GM12878 (cell line): ENCODE measurements at regions of chr19 and their contacts with region 1.

Region 1: DNA sequence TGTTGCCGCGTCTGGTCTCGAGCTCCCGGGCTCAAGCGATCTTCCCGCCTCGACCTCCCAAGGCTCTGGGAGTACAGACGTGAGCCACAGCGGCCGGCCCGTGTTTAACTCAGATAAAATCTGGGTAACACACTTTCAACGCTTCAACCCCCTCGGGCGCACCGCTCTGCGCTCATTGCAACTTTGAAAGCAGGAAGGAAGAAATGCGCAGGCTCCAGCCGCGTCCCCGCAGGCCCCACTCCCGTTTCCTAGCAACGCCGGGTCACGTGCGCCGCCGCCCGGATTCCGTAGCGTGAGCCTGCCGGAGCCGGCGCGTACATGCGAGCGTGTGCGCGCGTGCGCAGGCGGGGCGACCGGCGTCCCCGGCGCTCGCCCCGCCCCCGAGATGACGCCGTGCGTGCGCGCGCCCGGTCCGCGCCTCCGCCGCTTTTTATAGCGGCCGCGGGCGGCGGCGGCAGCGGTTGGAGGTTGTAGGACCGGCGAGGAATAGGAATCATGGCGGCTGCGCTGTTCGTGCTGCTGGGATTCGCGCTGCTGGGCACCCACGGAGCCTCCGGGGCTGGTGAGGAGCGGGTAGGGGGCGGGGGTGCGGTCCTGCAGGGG is at the start of gene BSG:
- DNase-seq: peak; percentile 88
- ATAC-seq: peak; percentile 76
- H3K4me3 ChIP-seq: peak within 1 kb of the TSS; percentile 83
- H3K27ac ChIP-seq: peak within 1 kb of the TSS; percentile 88
- H3K4me1 ChIP-seq: peaks cover 3% of the 10 kb centered on the region; the same call in 1 of the 2 replicates
- H3K27me3 ChIP-seq: no peaks in the 10 kb centered on the region
- CTCF ChIP-seq: no peak
- EP300 ChIP-seq: no peak; a peak in 1 of 4 replicates
- POLR2A ChIP-seq: peak; percentile 99
- RAD21 ChIP-seq: no peak
- polyA plus RNA-seq, gene BSG: 2.8 to 9.5 TPM

Region 2: DNA sequence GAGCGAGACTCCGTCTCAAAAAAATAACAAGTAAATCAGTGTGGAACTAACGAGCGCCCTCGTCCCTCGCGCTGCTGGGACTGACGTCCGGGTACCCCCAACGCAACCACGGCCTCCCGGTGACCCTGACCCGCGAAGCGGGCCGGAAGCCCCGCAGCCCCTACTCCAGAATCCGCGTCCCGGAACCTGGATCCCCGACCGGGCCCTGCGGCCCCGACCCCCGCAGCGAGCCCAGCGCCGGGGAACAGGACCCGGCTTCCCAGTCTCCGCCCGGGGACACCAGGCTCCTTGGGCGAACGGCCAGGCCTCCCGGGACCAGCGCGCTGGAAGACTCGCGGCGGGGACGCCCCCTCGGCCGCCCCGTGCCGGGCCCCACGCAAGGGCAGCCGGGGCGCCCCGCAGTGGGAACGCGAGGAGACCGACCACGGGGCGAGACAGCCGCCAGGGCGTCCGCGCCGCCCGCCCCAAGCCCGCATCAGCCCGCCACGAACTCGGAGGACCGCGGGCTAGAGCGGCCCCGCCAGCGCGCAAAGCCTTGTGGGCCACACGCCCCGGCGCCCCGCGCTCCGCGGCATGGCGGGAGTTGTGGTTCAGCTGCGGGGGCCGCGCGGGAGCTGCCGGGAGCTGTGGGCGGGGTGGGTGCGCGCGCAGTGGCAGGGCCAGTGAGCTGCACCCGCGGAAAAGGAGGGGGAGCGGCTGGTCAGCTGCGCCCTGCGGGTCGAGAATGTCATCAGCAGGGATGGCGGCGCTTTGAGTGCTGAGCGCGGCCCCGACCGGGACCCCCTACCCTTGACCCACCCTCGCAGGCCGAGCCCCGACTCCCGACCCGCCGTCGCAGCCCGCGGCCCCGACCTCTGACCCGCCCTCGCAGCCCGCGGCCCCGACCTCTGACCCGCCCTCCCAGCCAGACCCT is 83.5 kb before region 1 on chr19:
- CTCF ChIA-PET with region 1: no interaction called
- POLR2A ChIA-PET with region 1: no interaction called
- RAD21 ChIA-PET with region 1: no interaction called
- SMC1A ChIA-PET with region 1: no interaction called
- in situ Hi-C with region 1: no loop called
- intact Hi-C with region 1: no loop called
- DNase-seq: peak; percentile 59
- ATAC-seq: peak; percentile 98
- H3K4me3 ChIP-seq: peak overlapping the region; percentile 92
- H3K27ac ChIP-seq: peak overlapping the region; percentile 89
- H3K4me1 ChIP-seq: no peaks in the 10 kb centered on the region; the same call in 1 of the 2 replicates
- H3K27me3 ChIP-seq: no peaks in the 10 kb centered on the region
- CTCF ChIP-seq: no peak
- EP300 ChIP-seq: no peak
- POLR2A ChIP-seq: peak; percentile 94
- RAD21 ChIP-seq: no peak

Region 3: DNA sequence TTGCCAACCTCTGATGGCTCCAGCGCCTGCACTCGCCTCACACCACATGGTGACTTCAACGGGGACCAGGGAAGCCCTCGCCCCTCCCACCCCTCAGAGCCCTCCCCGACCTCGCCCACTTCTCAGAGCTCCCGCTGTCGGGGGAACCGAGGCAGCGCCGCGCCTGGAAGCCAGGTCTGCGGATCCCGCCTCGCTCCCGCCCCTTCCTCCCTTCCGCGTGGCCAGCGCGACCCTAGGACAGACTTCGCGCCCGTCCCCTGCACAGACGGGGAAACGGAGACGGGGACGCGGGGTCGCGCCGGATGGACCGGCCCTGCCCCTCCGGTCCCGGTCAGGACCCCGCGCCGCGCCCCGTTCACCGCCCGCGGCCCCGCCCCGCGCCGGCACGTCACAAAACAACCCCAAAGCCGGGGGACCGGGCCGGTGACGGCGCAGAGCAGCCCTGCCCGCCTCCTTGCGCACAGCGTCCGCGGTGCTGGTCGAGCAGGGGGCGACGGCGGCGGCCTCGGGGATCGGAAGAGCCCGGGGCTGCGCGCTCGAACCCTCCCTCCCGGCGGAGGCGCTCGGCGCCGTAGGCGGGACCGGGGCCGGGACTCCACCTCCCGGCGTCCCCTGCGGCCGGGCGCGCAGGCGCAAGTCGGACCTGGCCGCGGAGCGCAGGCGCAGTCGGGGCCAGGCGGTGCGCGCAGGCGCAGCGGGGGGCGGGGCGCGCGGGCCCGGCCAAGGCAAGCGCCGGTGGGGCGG is 41.1 kb before region 1 on chr19:
- CTCF ChIA-PET with region 1: interaction called, 4 read pairs
- POLR2A ChIA-PET with region 1: interaction called, 9 read pairs
- RAD21 ChIA-PET with region 1: interaction called, 10 read pairs
- SMC1A ChIA-PET with region 1: interaction called, 20 read pairs
- in situ Hi-C with region 1: no loop called
- intact Hi-C with region 1: loop called (anchors 5 kb)
- DNase-seq: no peak
- ATAC-seq: peak; percentile 78
- H3K4me3 ChIP-seq: peak overlapping the region; percentile 61
- H3K27ac ChIP-seq: peak overlapping the region; percentile 65
- H3K4me1 ChIP-seq: peaks cover 8% of the 10 kb centered on the region
- H3K27me3 ChIP-seq: no peaks in the 10 kb centered on the region
- CTCF ChIP-seq: 0 out of 6 replicates have a peak, but pooled peaks of 1 of the 3 experiments have one; percentile 7
- EP300 ChIP-seq: no peak
- POLR2A ChIP-seq: peak; percentile 67
- RAD21 ChIP-seq: no peak

Region 4: DNA sequence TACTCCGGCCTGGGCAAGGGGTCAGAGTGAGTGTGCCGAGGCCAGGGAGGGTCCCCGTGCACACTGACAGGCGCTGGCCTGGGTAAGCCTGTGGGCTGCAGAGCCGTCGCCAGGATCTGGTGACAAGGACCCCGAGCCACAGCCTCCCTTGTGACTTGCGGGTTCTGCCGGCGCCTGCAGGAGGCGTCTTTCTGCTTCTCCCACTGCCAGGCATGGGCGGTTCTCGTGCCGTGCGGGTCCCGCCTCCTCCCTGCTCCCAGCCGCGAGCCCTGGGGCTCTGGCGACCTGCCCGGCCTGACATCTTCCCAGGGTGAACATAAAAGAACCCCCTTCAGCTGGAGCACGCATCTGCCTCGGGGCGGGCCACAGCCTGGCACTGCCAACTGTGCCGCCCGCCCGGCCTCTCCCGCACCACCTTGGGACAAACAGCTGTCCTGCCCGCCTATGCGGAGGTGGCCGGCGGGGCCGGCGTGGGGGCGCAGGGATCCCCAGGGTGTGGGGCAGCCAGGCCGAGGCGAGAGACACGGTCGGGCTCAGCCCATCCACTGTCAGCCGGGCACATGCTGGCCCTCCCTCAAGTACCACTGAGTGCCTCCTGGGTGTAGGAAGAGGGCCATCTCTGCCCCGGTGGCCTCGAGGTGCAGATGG is 16.0 kb after region 1 on chr19:
- CTCF ChIA-PET with region 1: interaction called, 8 read pairs
- POLR2A ChIA-PET with region 1: no interaction called
- RAD21 ChIA-PET with region 1: interaction called, 11 read pairs
- SMC1A ChIA-PET with region 1: interaction called, 3 read pairs
- in situ Hi-C with region 1: no loop called
- intact Hi-C with region 1: no loop called
- DNase-seq: no peak
- ATAC-seq: peak; percentile 58
- H3K4me3 ChIP-seq: no peak overlapping the region
- H3K27ac ChIP-seq: no peak overlapping the region
- H3K4me1 ChIP-seq: no peaks in the 10 kb centered on the region
- H3K27me3 ChIP-seq: peaks cover 4 to 9% of the 10 kb centered on the region in 2 experiments
- CTCF ChIP-seq: peak; percentile 32 to 50 (median 40); a peak in 5 of 6 replicates
- EP300 ChIP-seq: no peak
- POLR2A ChIP-seq: no peak
- RAD21 ChIP-seq: peak; percentile 27; the same call in 1 of the 2 replicates

Region 5: DNA sequence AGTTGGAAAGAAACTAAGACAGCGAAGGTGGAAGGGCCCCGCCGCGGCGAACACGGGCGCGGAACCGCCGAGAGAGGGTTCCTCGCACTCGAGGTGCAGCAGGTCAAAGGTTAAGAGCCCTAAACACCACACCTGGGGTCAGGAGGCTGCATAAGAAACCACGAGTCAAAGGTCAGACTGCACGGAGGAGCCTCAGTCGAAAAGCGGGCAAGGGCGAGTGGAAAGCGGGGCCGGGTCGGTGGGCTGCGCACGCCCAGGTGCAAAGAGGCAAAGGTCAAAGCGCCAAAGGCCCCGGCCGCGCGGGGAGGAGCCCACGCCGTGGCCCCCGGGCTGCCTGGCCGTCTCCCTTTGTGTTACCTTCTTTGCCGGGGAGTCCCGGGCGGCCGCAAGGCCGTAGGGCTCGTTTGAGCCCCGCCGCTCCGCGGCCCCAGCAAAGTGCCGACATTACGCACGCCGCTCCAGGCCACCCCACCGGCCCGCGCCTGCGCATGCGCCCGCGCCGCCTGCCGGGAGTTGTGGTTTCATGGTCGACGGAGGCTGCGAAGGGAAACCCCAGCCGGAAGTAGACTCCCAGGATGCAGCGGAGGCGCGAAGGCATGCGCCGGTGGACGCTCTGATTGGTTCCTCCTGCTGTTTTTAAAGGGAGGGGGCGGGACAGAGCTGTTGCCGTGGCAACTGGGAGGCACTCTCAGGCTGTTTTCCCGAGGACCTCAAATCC is 61.0 kb after region 1 on chr19 and contains the start of gene POLRMT:
- CTCF ChIA-PET with region 1: no interaction called
- POLR2A ChIA-PET with region 1: interaction called, 5 read pairs
- RAD21 ChIA-PET with region 1: interaction called, 4 read pairs
- SMC1A ChIA-PET with region 1: no interaction called
- in situ Hi-C with region 1: no loop called
- intact Hi-C with region 1: loop called (anchors 5 kb)
- DNase-seq: peak; percentile 89
- ATAC-seq: peak; percentile 89
- H3K4me3 ChIP-seq: peak within 1 kb of the TSS; percentile 79
- H3K27ac ChIP-seq: peak within 1 kb of the TSS; percentile 70
- H3K4me1 ChIP-seq: peaks cover 26% of the 10 kb centered on the region
- H3K27me3 ChIP-seq: no peaks in the 10 kb centered on the region
- CTCF ChIP-seq: no peak
- EP300 ChIP-seq: no peak
- POLR2A ChIP-seq: peak; percentile 45; the same call in 1 of the 2 replicates
- RAD21 ChIP-seq: no peak
- polyA plus RNA-seq, gene POLRMT: 9.9 to 27.9 TPM

Region 6: GRCh38 chr19:796692-797527 is 224.7 kb after region 1 on chr19 and contains the start of gene PTBP1:
- CTCF ChIA-PET with region 1: no interaction called
- POLR2A ChIA-PET with region 1: no interaction called
- RAD21 ChIA-PET with region 1: no interaction called
- SMC1A ChIA-PET with region 1: no interaction called
- in situ Hi-C with region 1: no loop called
- intact Hi-C with region 1: loop called (anchors 2 kb)
- DNase-seq: peak; percentile 100
- ATAC-seq: peak; percentile 93
- H3K4me3 ChIP-seq: peak within 1 kb of the TSS; percentile 92
- H3K27ac ChIP-seq: peak within 1 kb of the TSS; percentile 90
- H3K4me1 ChIP-seq: peaks cover 7% of the 10 kb centered on the region; the same call in 1 of the 2 replicates
- H3K27me3 ChIP-seq: no peaks in the 10 kb centered on the region
- CTCF ChIP-seq: no peak
- EP300 ChIP-seq: peak in 1 of 2 experiments; percentile 8; a peak in 1 of 4 replicates
- POLR2A ChIP-seq: peak; percentile 87
- RAD21 ChIP-seq: no peak
- polyA plus RNA-seq, gene PTBP1: 13.1 to 31.6 TPM

Region 7: GRCh38 chr19:2269244-2269947 is 1697.2 kb after region 1 on chr19:
- CTCF ChIA-PET with region 1: no interaction called
- POLR2A ChIA-PET with region 1: no interaction called
- RAD21 ChIA-PET with region 1: no interaction called
- SMC1A ChIA-PET with region 1: no interaction called
- in situ Hi-C with region 1: no loop called
- intact Hi-C with region 1: no loop called
- DNase-seq: peak; percentile 66
- ATAC-seq: peak; percentile 61
- H3K4me3 ChIP-seq: peak overlapping the region; percentile 95
- H3K27ac ChIP-seq: peak overlapping the region; percentile 89
- H3K4me1 ChIP-seq: peaks cover 20% of the 10 kb centered on the region
- H3K27me3 ChIP-seq: no peaks in the 10 kb centered on the region
- CTCF ChIP-seq: peak; percentile 5 to 9 (median 9); a peak in 1 of 6 replicates
- EP300 ChIP-seq: no peak
- POLR2A ChIP-seq: peak; percentile 100
- RAD21 ChIP-seq: no peak